ENCODE measurements at regions of chr17 and their contacts with region 1.

Region 1: DNA sequence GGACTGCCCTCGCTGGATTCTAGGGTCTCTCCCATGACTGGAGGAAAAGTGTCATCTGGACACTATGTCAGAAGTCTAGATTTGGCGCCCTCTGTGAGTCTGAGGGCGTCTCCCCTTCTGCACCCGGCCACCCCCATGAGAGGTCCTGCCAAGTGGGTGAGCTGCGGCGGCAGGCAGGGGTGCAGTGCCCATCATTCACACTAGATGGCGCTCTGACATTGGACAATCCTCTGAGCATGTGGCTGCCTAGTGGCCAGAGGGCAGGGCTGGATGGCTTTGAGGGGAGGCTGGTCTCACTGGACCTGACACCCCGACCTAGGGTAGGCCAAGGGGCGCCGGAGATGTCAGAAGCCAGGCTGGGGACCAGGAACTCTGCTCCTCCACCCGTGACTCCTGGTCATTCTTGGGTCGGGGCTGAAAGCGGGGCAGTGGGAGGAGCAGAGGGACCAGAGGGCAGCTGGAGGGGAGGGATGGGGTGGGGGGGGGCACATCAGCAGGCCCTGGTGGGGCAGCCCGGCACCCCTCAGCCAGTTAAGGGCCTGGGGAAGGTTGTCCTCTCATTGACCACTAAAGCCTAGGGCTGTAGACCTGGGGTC is 28.0 kb downstream of the MRM1 start:
- DNase-seq: peak; percentile 87
- ATAC-seq: peak; percentile 92
- H3K4me3 Mint-ChIP-seq: no peak overlapping the region
- H3K27ac Mint-ChIP-seq: no peak overlapping the region
- H3K4me1 Mint-ChIP-seq: no peaks in the 10 kb centered on the region
- H3K27me3 Mint-ChIP-seq: peaks cover 4% of the 10 kb centered on the region

Region 2: GRCh38 chr17:36591434-36592315 is 37.7 kb before region 1 on chr17 and contains the start of gene DHRS11:
- CTCF ChIA-PET with region 1: interaction called, 3 read pairs
- POLR2A ChIA-PET with region 1: no interaction called
- intact Hi-C with region 1: loop called in 1 of 2 experiments (anchors 1 kb)
- DNase-seq: peak; percentile 88
- ATAC-seq: peak; percentile 93
- H3K4me3 Mint-ChIP-seq: peak within 1 kb of the TSS; percentile 69
- H3K27ac Mint-ChIP-seq: peak within 1 kb of the TSS; percentile 73
- H3K4me1 Mint-ChIP-seq: peaks cover 25% of the 10 kb centered on the region
- H3K27me3 Mint-ChIP-seq: no peaks in the 10 kb centered on the region
- total RNA-seq, gene DHRS11: 9.2 to 10.2 TPM

Region 3: GRCh38 chr17:36665417-36665816 is 36.1 kb after region 1 on chr17:
- CTCF ChIA-PET with region 1: no interaction called
- POLR2A ChIA-PET with region 1: no interaction called
- intact Hi-C with region 1: no loop called
- DNase-seq: no peak
- ATAC-seq: no peak
- H3K4me3 Mint-ChIP-seq: no peak overlapping the region
- H3K27ac Mint-ChIP-seq: no peak overlapping the region
- H3K4me1 Mint-ChIP-seq: no peaks in the 10 kb centered on the region
- H3K27me3 Mint-ChIP-seq: peaks cover 12% of the 10 kb centered on the region

Region 4: DNA sequence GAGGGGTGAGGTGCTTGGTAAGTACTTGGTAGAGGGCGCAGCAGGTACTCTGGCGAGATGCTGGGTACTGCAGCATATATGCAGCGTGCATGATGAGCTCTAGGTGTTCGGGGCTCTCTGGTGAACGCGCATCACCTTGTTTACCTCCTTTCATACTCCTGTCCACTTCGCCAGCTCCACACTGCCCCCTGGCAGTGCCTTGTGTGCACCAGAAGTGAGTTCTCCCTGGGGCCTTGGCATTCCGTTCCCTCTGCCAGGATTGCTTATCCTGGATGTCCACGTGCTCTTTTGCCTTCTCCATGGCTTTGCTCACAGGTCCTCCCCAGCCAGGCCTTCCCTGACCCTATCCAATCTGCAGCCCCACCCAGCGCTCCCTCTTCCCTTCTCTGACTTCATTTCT is 126.2 kb after region 1 on chr17:
- CTCF ChIA-PET with region 1: interaction called, 6 read pairs
- POLR2A ChIA-PET with region 1: no interaction called
- intact Hi-C with region 1: loop called (anchors 1 kb)
- DNase-seq: peak; percentile 69
- ATAC-seq: peak; percentile 51
- H3K4me3 Mint-ChIP-seq: no peak overlapping the region
- H3K27ac Mint-ChIP-seq: no peak overlapping the region
- H3K4me1 Mint-ChIP-seq: no peaks in the 10 kb centered on the region
- H3K27me3 Mint-ChIP-seq: no peaks in the 10 kb centered on the region

Region 5: DNA sequence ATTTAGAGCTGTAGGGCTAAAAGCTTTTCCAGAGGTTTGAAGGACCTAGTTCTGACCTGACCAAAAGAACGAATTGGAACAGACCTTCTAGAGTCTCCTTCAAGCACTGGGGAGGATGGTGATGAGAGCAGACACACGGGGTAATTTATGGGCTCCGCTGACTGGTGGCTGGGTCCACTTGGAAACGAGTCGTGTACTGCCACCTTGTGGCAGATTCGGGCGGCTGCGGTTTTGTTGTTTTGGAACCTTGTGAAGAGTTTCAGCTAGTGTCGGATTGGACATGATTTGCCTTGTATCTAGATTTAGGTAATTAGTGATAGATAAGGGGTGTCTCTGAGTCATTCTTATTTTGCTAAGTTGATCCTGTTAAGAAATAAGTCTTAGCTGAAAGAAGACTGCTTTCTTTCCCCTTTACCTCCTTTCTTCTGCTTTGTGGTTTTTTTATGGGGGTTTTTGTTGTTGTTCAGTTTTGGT is 418.3 kb after region 1 on chr17:
- CTCF ChIA-PET with region 1: interaction called, 37 read pairs
- POLR2A ChIA-PET with region 1: no interaction called
- intact Hi-C with region 1: loop called (anchors 1 kb)
- DNase-seq: peak; percentile 92
- ATAC-seq: peak; percentile 91
- H3K4me3 Mint-ChIP-seq: no peak overlapping the region
- H3K27ac Mint-ChIP-seq: no peak overlapping the region
- H3K4me1 Mint-ChIP-seq: peaks cover 12% of the 10 kb centered on the region
- H3K27me3 Mint-ChIP-seq: no peaks in the 10 kb centered on the region

Region 6: DNA sequence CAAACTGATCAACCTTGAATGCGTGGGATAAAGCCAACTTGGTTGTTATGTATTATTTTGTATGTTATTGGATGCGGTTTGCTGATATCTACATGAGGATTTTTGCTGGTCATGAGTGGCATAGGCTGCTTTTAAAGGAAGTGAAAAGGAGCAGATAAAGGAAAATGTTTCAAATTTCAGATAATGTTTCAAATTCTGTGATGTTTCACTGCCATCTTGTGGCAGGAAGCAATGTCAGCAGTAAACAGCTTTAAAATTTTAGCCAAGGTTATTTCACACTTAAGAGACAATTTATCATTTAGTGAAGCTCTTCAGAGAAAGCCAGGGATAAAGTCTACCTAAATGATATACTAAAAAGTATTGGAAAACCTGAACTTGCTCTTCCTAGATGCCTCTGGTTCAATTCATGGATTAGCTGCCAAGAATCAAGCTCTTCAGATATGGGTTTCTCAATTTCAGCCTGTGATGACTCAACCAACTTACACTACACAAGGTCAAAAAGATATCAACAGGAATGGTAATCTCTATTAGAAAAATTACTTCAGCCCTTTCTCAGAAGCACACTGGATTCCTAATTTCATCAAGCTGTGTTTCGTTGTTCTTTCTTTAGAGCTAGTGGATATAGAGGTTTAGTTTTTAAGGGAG is 610.5 kb after region 1 on chr17:
- CTCF ChIA-PET with region 1: interaction called, 4 read pairs
- POLR2A ChIA-PET with region 1: no interaction called
- intact Hi-C with region 1: loop called (anchors 1 to 2 kb)
- DNase-seq: no peak
- ATAC-seq: no peak
- H3K4me3 Mint-ChIP-seq: no peak overlapping the region
- H3K27ac Mint-ChIP-seq: no peak overlapping the region
- H3K4me1 Mint-ChIP-seq: no peaks in the 10 kb centered on the region
- H3K27me3 Mint-ChIP-seq: no peaks in the 10 kb centered on the region

Measured in activated CD4-positive, alpha-beta T cell treated with anti-CD3 and anti-CD28 coated beads for 36 hours (primary cell).